Common myeloid progenitor, CD34-positive (primary cell): ENCODE measurements at regions of chr1 and their contacts with region 1.

Region 1: GRCh38 chr1:17661546-17662157 is 93.5 kb upstream of the ACTL8 start:
- DNase-seq: peak; percentile 31 to 64 (median 48)
- H3K4me3 ChIP-seq: no peak overlapping the region
- H3K27ac ChIP-seq: no peak overlapping the region
- H3K4me1 ChIP-seq: no peaks in the 10 kb centered on the region
- H3K27me3 ChIP-seq: no peaks in the 10 kb centered on the region

Region 2: GRCh38 chr1:17646444-17647287 is 15.0 kb before region 1 on chr1:
- CTCF ChIA-PET with region 1: no interaction called
- POLR2A ChIA-PET with region 1: no interaction called
- DNase-seq: no peak
- H3K4me3 ChIP-seq: no peak overlapping the region
- H3K27ac ChIP-seq: no peak overlapping the region
- H3K4me1 ChIP-seq: no peaks in the 10 kb centered on the region
- H3K27me3 ChIP-seq: peaks cover 0 to 7% (median 0%) of the 10 kb centered on the region in 5 experiments

Region 3: DNA sequence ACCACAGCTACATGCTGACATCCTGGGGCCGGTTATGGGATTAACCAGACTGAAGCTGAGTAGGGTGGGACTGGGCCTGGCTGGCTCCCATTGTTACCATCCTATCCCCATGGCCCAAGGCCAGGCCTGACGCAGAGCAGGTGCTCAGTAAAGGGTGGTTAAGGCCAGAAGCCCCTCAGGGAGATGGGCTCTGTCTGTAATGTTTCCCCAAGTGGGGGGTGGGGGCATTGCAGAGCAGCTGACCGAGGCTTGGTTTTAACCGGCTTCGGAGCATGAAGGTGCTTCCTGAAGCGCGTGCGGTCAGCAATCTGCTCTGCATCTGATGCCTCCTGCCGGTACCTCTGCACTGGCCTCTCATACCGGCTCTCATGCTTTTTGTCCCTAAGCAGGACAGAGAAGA is 10.1 kb after region 1 on chr1:
- CTCF ChIA-PET with region 1: interaction called, 26 read pairs
- POLR2A ChIA-PET with region 1: no interaction called
- DNase-seq: peak; percentile 8 to 75 (median 52)
- H3K4me3 ChIP-seq: no peak overlapping the region
- H3K27ac ChIP-seq: no peak overlapping the region
- H3K4me1 ChIP-seq: peaks cover 0 to 5% (median 1%) of the 10 kb centered on the region in 4 experiments
- H3K27me3 ChIP-seq: no peaks in the 10 kb centered on the region

Region 4: GRCh38 chr1:17826165-17826488 is 164.5 kb after region 1 on chr1:
- CTCF ChIA-PET with region 1: interaction called, 25 read pairs
- POLR2A ChIA-PET with region 1: no interaction called
- DNase-seq: peak; percentile 19 to 50 (median 35)
- H3K4me3 ChIP-seq: no peak overlapping the region
- H3K27ac ChIP-seq: no peak overlapping the region
- H3K4me1 ChIP-seq: no peaks in the 10 kb centered on the region
- H3K27me3 ChIP-seq: peaks cover 0 to 13% (median 5%) of the 10 kb centered on the region in 5 experiments